ENCODE measurements at regions of chrX and their contacts with region 1.

Region 1: GRCh38 chrX:150683536-150684146 is 9.6 kb upstream of the MTMR1 start:
- DNase-seq: no peak
- ATAC-seq: no peak
- H3K4me3 ChIP-seq: no peak overlapping the region
- H3K27ac ChIP-seq: no peak overlapping the region
- H3K4me1 ChIP-seq: no peaks in the 10 kb centered on the region
- H3K27me3 ChIP-seq: peaks cover 0 to 4% (median 0%) of the 10 kb centered on the region in 9 donors
- CTCF ChIP-seq: peak; percentile 15 to 56 (median 47)
- POLR2A ChIP-seq: no peak

Region 2: DNA sequence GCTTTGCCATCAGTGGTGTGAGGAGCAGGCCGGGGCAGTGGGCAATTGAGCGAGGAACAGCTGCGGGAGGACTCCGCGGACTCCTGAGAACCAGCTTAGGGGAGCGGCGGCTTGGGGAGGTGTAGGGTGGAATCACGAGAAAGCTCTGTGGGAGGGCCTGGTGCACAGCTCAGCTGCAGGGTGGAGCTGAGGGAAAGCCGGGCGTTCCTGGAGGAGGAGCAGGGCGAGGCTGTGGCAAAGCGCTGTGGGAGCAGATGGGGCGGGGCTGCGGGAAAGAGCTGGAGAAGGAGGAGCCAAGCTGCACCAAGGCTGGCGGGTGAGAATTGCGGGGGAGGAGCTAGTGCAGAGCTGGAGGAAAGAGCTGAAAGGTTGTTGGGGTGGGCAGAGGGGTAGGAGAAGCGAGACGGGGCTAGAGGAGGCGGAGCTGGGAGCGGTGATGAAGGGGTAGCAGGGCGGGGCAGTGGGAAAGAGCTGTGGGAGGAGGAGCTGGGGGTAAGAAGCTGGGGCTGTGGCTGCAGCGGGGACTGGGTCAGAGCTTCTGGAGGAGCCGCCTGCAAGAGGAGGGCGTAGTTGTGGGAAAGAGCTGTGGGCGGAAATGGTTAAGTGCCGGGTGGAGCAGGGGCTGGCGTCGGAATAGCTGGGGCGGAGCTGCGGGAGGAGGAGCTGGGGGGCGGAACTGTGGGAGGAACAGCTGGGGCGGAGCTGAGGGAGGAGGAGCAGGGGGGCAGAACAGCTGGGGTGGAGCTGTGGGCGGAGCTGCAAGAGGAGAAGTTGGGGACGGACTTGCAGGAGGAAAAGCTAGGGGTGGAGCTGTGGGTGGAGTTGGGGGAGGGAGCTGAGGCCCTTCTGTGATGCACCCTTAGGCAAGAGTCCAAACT is 743.6 kb before region 1 on chrX:
- intact Hi-C with region 1: loop called in 1 of 10 experiments (anchors 10 kb)
- DNase-seq: peak; percentile 95 to 97 (median 95)
- ATAC-seq: peak; percentile 68 to 78 (median 74)
- H3K4me3 ChIP-seq: peak overlapping the region in 11 of 12 donors; percentile 30 to 94 (median 58)
- H3K27ac ChIP-seq: peak overlapping the region; percentile 86 to 100 (median 93)
- H3K4me1 ChIP-seq: peaks cover 0 to 8% (median 5%) of the 10 kb centered on the region in 12 donors
- H3K27me3 ChIP-seq: no peaks in the 10 kb centered on the region
- CTCF ChIP-seq: no peak
- POLR2A ChIP-seq: no peak

Region 3: DNA sequence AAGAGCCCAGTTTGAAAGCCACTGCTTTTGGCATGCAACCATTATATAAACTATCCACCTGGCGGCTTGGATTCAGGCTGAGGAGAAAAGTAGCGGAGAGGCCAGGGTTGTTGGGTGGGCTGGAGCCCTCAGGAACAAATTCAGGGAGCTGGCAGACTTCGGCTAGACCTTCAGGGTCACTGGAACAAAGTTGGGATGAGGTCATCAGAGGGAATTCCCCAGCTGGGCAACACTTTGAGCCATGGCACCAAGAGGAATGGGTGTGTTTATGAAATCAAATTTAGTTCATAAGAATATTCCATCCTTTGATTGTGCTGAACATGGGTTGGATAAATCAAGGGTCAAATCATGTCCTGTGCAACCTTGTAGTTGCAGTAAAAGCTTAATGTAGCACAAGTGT is 31.5 kb after region 1 on chrX:
- intact Hi-C with region 1: loop called in 2 of 10 experiments (anchors 2 to 5 kb)
- DNase-seq: no peak
- ATAC-seq: no peak
- H3K4me3 ChIP-seq: no peak overlapping the region
- H3K27ac ChIP-seq: no peak overlapping the region
- H3K4me1 ChIP-seq: peaks cover 0 to 5% (median 0%) of the 10 kb centered on the region in 12 donors
- H3K27me3 ChIP-seq: no peaks in the 10 kb centered on the region
- CTCF ChIP-seq: no peak
- POLR2A ChIP-seq: no peak